ENCODE measurements at regions of chr1 and their contacts with region 1.

Region 1: GRCh38 chr1:151939779-151940178 is 30.5 kb upstream of the THEM4 start:
- DNase-seq: no peak
- H3K4me3 Mint-ChIP-seq: no peak overlapping the region
- H3K27ac Mint-ChIP-seq: no peak overlapping the region
- H3K4me1 Mint-ChIP-seq: peaks cover 10% of the 10 kb centered on the region
- H3K27me3 Mint-ChIP-seq: peaks cover 10% of the 10 kb centered on the region

Region 2: DNA sequence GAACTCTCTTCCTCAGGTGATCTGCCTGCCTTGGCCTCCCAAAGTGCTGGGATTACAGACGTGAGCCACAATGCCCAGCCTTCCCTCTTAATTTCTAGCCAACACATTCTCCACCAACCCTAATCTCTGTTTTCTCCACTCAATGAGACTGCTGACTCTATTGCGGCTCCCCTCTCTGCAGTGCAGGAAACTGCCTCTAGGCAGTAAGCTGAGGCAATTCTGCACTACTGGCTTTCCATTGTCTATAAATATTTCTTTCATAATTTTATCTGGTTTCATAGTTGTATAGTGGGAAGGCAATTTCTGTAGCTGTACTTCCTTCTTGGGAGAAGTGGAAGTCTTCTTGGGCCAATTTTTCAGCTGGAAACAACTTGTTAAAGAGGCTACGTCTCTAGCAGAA is 186.6 kb before region 1 on chr1:
- intact Hi-C with region 1: no loop called
- DNase-seq: no peak
- H3K4me3 Mint-ChIP-seq: no peak overlapping the region
- H3K27ac Mint-ChIP-seq: no peak overlapping the region
- H3K4me1 Mint-ChIP-seq: peaks cover 6% of the 10 kb centered on the region
- H3K27me3 Mint-ChIP-seq: peaks cover 20% of the 10 kb centered on the region

Region 3: DNA sequence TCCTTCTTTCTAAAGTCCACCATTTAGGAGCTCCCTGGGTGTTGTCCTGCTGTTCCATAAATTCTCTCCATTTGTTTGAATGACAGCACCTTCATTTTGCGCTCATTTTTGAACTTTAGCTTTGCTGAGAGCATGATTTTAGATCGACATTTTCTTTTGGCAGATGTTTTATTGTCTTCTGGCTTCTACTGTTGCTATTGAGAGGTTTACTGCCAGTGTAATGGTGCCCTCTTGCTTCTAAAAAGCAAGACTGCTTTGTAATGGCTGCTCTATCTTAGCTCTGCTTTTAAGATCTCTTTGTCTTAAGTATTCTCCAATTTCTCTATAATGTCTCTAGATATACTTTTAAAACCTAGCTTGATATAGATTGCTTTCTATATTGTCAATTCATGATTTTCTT is 58.3 kb before region 1 on chr1:
- intact Hi-C with region 1: no loop called
- DNase-seq: no peak
- H3K4me3 Mint-ChIP-seq: no peak overlapping the region
- H3K27ac Mint-ChIP-seq: no peak overlapping the region
- H3K4me1 Mint-ChIP-seq: no peaks in the 10 kb centered on the region
- H3K27me3 Mint-ChIP-seq: no peaks in the 10 kb centered on the region

Region 4: DNA sequence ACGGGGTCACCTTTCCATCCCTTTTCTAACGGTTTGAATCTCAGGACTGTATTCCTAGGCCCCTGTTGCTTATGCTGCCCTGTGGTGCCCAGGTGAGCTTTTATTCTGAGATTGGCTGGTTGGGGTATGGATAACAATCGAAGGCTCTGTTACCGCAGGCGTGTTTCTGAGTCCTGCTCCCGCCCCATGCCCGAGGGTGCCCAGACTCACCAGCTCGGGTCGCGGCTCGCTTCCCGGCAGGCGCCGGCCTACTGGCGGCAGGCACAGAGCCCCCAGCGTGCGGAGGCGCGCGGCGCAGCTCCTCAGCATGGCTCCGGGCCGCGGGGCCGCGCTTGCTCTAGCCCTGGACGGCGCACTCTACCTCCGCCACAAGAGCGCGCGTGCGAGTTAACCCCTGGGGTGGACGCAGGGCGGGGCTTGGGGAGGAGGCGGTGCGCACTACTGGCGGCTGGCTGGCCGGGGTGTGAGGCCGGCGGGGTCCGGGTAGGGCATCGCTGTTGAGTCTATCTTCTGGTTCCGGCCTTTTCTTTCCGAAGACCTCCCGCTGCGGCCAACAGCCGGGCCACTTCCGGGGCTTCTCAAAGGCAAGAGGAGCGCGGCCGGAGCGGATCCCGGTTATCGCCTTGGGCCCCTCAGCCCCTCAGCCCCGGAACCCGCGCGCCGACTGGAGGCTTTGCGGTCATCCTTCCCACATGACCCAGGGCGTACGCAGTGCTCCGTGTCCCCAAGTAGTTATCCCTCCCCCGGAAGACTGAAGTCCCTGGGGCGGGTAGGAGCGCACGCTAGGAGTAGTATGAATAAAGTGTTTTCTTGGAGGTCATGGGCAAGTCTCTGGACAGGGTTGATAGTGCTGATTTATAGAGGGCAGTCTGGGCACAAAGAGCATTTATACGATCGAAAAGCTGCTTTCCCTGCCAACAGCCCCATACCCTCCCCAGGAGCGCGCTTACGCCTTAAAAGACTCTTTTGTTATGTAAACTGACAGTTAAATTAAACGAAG is 30.3 kb before region 1 on chr1 and contains the start of gene THEM4:
- intact Hi-C with region 1: loop called (anchors 2 kb)
- DNase-seq: peak; percentile 97
- H3K4me3 Mint-ChIP-seq: peak within 1 kb of the TSS; percentile 91
- H3K27ac Mint-ChIP-seq: peak within 1 kb of the TSS; percentile 93
- H3K4me1 Mint-ChIP-seq: peaks cover 25% of the 10 kb centered on the region
- H3K27me3 Mint-ChIP-seq: peaks cover 2% of the 10 kb centered on the region
- total RNA-seq, gene THEM4: 26.9 and 30.6 TPM in 2 replicates

Region 5: DNA sequence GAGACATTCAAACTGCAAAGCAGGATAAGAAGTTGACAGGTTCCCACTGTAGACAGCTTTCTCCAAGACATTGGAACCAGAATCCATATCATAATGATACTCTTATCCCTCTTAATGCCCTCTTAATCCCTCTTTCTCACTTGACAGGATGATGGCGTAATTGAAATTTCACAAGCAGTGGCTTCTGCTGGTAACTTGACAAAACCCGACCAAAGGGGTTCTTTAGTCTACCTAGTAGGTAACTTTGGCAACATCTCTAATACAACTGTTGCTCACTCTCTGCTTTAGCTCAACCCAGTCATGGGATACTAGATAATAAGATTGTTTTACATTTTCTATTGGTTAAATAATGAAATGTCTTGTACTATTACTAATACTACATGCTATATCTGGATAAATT is 19.2 kb after region 1 on chr1:
- intact Hi-C with region 1: no loop called
- DNase-seq: no peak
- H3K4me3 Mint-ChIP-seq: no peak overlapping the region
- H3K27ac Mint-ChIP-seq: no peak overlapping the region
- H3K4me1 Mint-ChIP-seq: peaks cover 2% of the 10 kb centered on the region
- H3K27me3 Mint-ChIP-seq: peaks cover 12% of the 10 kb centered on the region

Measured in activated CD4-positive, alpha-beta T cell treated with anti-CD3 and anti-CD28 coated beads, Interleukin-2, amount 10 ng/mL, durations not matched to agents 24 days and 14 days (primary cell).